ENCODE measurements at regions of chr18 and their contacts with region 1.

Region 1: GRCh38 chr18:35386600-35387351 is 9.6 kb upstream of the ZNF396 start:
- DNase-seq: no peak
- ATAC-seq: peak; percentile 90
- H3K4me3 ChIP-seq: no peak overlapping the region
- H3K27ac ChIP-seq: no peak overlapping the region
- H3K4me1 ChIP-seq: no peaks in the 10 kb centered on the region
- H3K27me3 ChIP-seq: 0 out of 4 replicates have a peak, but pooled peaks cover 0 to 3% of the 10 kb centered on the region in 2 experiments
- CTCF ChIP-seq: peak; percentile 88 to 92 (median 89)
- EP300 ChIP-seq: no peak
- POLR2A ChIP-seq: no peak
- RAD21 ChIP-seq: peak; percentile 85

Region 2: GRCh38 chr18:35282353-35282752 is 104.4 kb before region 1 on chr18:
- CTCF ChIA-PET with region 1: no interaction called
- POLR2A ChIA-PET with region 1: no interaction called
- RAD21 ChIA-PET with region 1: no interaction called
- SMC1A ChIA-PET with region 1: no interaction called
- in situ Hi-C with region 1: no loop called
- intact Hi-C with region 1: no loop called
- DNase-seq: no peak
- ATAC-seq: no peak
- H3K4me3 ChIP-seq: no peak overlapping the region
- H3K27ac ChIP-seq: no peak overlapping the region
- H3K4me1 ChIP-seq: no peaks in the 10 kb centered on the region
- H3K27me3 ChIP-seq: no peaks in the 10 kb centered on the region
- CTCF ChIP-seq: no peak
- EP300 ChIP-seq: no peak
- POLR2A ChIP-seq: no peak
- RAD21 ChIP-seq: no peak

Region 3: GRCh38 chr18:35374708-35375107 is 12.1 kb before region 1 on chr18:
- CTCF ChIA-PET with region 1: interaction called, 13 read pairs
- POLR2A ChIA-PET with region 1: no interaction called
- RAD21 ChIA-PET with region 1: interaction called, 3 read pairs
- SMC1A ChIA-PET with region 1: interaction called, 6 read pairs
- in situ Hi-C with region 1: no loop called
- intact Hi-C with region 1: no loop called
- DNase-seq: no peak
- ATAC-seq: no peak
- H3K4me3 ChIP-seq: no peak overlapping the region
- H3K27ac ChIP-seq: no peak overlapping the region
- H3K4me1 ChIP-seq: no peaks in the 10 kb centered on the region
- H3K27me3 ChIP-seq: no peaks in the 10 kb centered on the region
- CTCF ChIP-seq: no peak
- EP300 ChIP-seq: no peak
- POLR2A ChIP-seq: no peak
- RAD21 ChIP-seq: no peak

Region 4: DNA sequence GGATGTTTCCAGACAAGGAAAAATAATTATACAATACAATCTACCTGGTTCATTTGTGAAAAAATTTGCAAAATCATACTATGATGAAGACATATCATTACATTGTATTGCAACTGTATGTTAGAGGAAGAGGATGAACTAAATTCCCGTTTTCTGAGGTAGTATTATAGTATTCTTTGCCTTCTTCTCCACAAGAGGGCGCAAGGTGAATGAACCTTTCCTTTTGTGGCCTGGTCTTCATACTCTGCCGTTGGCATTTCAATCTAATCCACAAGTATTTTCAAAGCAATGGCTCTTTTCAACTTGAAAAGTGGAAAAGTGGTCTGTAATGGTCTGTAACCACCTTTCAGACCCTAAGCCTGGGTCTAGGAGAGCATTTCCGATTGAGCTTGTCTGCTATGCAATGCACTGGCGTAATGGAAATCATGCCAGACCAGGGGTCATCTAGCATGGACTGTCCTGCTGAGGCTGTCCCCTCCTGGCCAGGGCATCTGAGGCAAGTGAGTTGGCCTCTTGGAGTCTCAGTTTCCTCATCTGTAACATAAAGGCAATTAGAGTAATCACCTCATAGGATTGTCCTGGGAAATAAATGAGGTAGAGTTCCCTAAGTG is 21.2 kb after region 1 on chr18:
- CTCF ChIA-PET with region 1: interaction called, 35 read pairs
- POLR2A ChIA-PET with region 1: no interaction called
- RAD21 ChIA-PET with region 1: interaction called, 6 read pairs
- SMC1A ChIA-PET with region 1: interaction called, 38 read pairs
- in situ Hi-C with region 1: no loop called
- intact Hi-C with region 1: no loop called
- DNase-seq: no peak
- ATAC-seq: peak; percentile 78
- H3K4me3 ChIP-seq: no peak overlapping the region
- H3K27ac ChIP-seq: no peak overlapping the region
- H3K4me1 ChIP-seq: peaks cover 21% of the 10 kb centered on the region
- H3K27me3 ChIP-seq: no peaks in the 10 kb centered on the region
- CTCF ChIP-seq: peak; percentile 67 to 85 (median 76)
- EP300 ChIP-seq: no peak
- POLR2A ChIP-seq: no peak
- RAD21 ChIP-seq: peak; percentile 93

Region 5: GRCh38 chr18:35756506-35757117 is 369.8 kb after region 1 on chr18:
- CTCF ChIA-PET with region 1: interaction called, 8 read pairs
- POLR2A ChIA-PET with region 1: no interaction called
- RAD21 ChIA-PET with region 1: interaction called, 10 read pairs
- SMC1A ChIA-PET with region 1: interaction called, 17 read pairs
- in situ Hi-C with region 1: no loop called
- intact Hi-C with region 1: no loop called
- DNase-seq: no peak
- ATAC-seq: peak; percentile 93
- H3K4me3 ChIP-seq: no peak overlapping the region
- H3K27ac ChIP-seq: no peak overlapping the region
- H3K4me1 ChIP-seq: no peaks in the 10 kb centered on the region
- H3K27me3 ChIP-seq: peaks cover 0 to 2% of the 10 kb centered on the region in 2 experiments; a peak in 2 of 4 replicates
- CTCF ChIP-seq: peak; percentile 51 to 84 (median 53); a peak in 5 of 6 replicates
- EP300 ChIP-seq: no peak
- POLR2A ChIP-seq: no peak
- RAD21 ChIP-seq: peak; percentile 92

Measured in GM12878 (cell line).